Activated T-helper 2 cell treated with anti-CD3 and anti-CD28 coated beads, Interferon-gamma antibody, Interleukin-2, Interleukin-4, amounts not matched to agents 10 μg/mL and 5 μg/mL and 100 μg/mL, durations not matched to agents 14 hours and 24 hours and 36 hours (primary cell): ENCODE measurements at regions of chr1 and their contacts with region 1.

Region 1: GRCh38 chr1:234925440-234926263 is 203.0 kb downstream of the TOMM20 start:
- DNase-seq: no peak
- H3K4me3 Mint-ChIP-seq: peak overlapping the region; percentile 72
- H3K27ac Mint-ChIP-seq: peak overlapping the region; percentile 98
- H3K4me1 Mint-ChIP-seq: peaks cover 58% of the 10 kb centered on the region
- H3K27me3 Mint-ChIP-seq: no peaks in the 10 kb centered on the region

Region 2: DNA sequence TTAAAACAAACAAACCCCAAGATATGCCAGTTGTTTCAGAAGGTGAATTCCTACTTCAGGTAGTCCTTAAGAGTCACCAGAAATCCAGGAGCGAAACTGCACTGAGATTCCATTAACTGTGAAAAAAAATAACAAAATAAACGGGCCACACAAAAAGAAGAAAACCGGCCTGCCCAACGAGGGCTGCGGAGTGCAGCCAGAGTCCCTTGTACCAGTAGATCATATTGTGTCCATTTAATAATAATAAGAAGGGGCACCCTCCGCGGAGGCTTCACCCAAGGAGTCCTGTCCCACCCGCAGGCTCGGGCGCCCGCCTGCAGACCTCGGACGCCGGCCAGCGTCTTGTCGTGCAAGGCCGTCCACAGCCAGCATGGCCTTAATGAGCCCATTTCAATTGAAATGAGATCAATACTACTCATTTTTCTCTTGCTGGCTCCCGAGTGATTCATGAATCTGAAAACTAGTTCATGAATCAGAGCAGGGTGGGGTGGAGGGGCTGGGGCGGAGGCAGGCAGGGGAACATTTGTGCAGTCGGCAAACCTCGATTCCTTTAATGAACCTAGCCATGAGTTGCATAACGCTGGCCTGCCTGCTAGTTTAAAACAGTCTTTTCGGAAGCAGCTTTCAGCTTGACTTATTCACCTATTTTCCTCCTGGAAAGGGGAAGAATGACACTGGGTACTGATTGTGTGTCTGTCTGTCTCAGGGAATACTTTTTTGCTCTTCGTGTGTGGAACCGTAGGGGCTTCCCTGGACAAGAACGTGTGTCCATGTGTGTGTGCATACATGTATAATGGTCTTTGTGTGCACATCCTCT is 202.5 kb before region 1 on chr1:
- intact Hi-C with region 1: loop called (anchors 2 kb)
- DNase-seq: peak; percentile 26
- H3K4me3 Mint-ChIP-seq: peak overlapping the region; percentile 72
- H3K27ac Mint-ChIP-seq: peak overlapping the region; percentile 99
- H3K4me1 Mint-ChIP-seq: peaks cover 73% of the 10 kb centered on the region
- H3K27me3 Mint-ChIP-seq: no peaks in the 10 kb centered on the region

Region 3: GRCh38 chr1:234842726-234843641 is 82.7 kb before region 1 on chr1:
- intact Hi-C with region 1: loop called (anchors 1 kb)
- DNase-seq: peak; percentile 57
- H3K4me3 Mint-ChIP-seq: peak overlapping the region; percentile 77
- H3K27ac Mint-ChIP-seq: peak overlapping the region; percentile 90
- H3K4me1 Mint-ChIP-seq: peaks cover 93% of the 10 kb centered on the region
- H3K27me3 Mint-ChIP-seq: no peaks in the 10 kb centered on the region

Region 4: GRCh38 chr1:234881893-234882771 is 43.5 kb before region 1 on chr1:
- intact Hi-C with region 1: loop called (anchors 1 kb)
- DNase-seq: peak; percentile 25
- H3K4me3 Mint-ChIP-seq: no peak overlapping the region
- H3K27ac Mint-ChIP-seq: peak overlapping the region; percentile 75
- H3K4me1 Mint-ChIP-seq: peaks cover 56% of the 10 kb centered on the region
- H3K27me3 Mint-ChIP-seq: no peaks in the 10 kb centered on the region

Region 5: DNA sequence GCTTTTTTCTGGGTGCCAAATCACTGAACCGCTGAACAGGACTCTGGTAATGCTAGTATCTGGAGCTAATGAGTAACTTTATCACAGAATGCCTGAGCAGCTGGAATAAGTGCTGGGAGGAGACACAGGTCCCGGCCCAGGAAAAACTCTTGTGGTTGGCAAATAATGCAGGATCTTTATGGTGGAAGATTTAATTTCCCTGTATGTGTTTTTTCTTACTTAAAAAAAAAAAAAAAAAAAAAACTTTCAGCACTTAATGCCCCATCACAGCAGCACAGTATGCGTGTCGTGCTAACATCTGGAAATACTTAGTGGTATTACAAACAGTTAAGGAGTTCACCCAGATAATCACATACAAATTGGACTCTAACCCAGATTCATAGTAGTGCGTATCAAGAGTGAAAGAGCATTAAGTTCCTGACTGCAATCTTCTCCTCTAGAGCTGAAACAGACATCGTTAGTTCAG is 17.7 kb before region 1 on chr1:
- intact Hi-C with region 1: no loop called
- DNase-seq: no peak
- H3K4me3 Mint-ChIP-seq: no peak overlapping the region
- H3K27ac Mint-ChIP-seq: no peak overlapping the region
- H3K4me1 Mint-ChIP-seq: peaks cover 20% of the 10 kb centered on the region
- H3K27me3 Mint-ChIP-seq: no peaks in the 10 kb centered on the region

Region 6: DNA sequence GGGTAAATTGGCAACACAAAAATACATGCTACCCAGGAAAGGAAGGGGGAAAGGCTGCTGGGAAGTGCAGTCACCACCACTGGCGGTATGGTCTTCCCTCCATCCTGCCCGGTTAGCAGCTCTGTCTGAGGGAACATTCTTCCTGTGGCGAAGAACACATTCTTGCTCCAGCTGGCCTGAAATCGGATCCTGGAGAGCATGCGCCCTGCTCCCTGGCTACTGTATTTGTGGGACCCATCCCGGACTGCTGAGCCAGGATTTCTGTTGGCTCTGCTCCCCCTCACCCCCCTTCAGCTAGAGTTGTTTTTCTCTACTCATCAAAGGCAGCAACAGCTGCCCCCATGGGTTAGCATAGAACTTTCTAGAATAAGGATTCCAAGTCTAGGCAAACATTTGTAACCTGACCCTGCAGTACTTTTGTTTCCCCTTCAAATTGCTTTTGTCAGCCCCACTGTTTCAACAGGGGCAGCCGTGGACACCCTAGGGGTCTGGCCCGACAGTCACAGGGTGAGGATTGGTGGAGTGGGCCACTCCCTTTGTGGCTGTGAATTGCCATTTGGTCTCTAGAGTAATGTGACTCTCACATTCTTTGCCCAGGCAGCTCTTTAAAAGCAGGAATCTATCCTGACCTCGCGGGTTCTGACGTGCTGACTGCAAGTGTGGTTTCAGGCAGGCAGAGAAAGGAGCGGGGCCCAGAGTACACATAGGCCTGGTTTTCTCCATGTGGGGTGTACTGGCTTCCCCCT is 45.3 kb after region 1 on chr1:
- intact Hi-C with region 1: loop called (anchors 2 kb)
- DNase-seq: no peak
- H3K4me3 Mint-ChIP-seq: no peak overlapping the region
- H3K27ac Mint-ChIP-seq: peak overlapping the region; percentile 85
- H3K4me1 Mint-ChIP-seq: peaks cover 66% of the 10 kb centered on the region
- H3K27me3 Mint-ChIP-seq: no peaks in the 10 kb centered on the region